Common myeloid progenitor, CD34-positive (primary cell): ENCODE measurements at regions of chr9 and their contacts with region 1.

Region 1: GRCh38 chr9:93132287-93132927 is 1.6 kb downstream of the NINJ1 start:
- DNase-seq: no peak
- H3K4me3 ChIP-seq: peak overlapping the region in 3 of 7 experiments; percentile 75 to 86 (median 79)
- H3K27ac ChIP-seq: no peak overlapping the region
- H3K4me1 ChIP-seq: peaks cover 0 to 74% (median 65%) of the 10 kb centered on the region in 4 experiments
- H3K27me3 ChIP-seq: no peaks in the 10 kb centered on the region

Region 2: DNA sequence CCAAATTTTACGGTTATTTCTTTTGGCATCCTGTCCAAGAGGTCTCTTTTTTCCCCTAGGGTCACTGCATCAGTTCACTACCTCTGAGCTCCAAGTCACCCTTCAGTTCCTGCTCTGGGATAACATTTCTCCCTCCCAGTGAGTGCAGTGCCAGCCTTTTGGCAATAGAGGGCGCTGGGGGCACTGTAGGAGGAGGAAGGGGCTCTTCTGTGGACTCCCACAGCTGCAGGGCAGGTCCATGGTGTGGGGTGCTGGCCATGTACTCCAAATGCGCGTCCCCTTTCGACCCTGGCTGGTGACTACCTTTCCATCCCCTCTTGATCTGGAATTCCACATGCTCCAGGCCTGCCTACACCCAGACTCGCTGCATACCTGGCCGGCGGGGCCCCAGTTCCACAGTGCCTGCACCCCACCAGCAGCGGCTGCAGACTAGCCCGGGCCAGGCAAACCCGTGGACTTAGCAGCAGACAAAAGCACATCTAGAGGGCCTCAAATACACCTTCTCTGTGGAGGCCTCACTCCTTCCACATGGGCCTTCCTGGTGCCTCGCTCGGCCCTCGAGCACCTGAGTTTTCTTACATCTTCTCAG is 22.0 kb after region 1 on chr9:
- CTCF ChIA-PET with region 1: interaction called, 11 read pairs
- POLR2A ChIA-PET with region 1: no interaction called
- DNase-seq: peak; percentile 41 to 61 (median 55)
- H3K4me3 ChIP-seq: no peak overlapping the region
- H3K27ac ChIP-seq: no peak overlapping the region
- H3K4me1 ChIP-seq: no peaks in the 10 kb centered on the region
- H3K27me3 ChIP-seq: no peaks in the 10 kb centered on the region

Region 3: GRCh38 chr9:93183609-93184431 is 51.4 kb after region 1 on chr9 and contains the start of gene WNK2:
- CTCF ChIA-PET with region 1: no interaction called
- POLR2A ChIA-PET with region 1: no interaction called
- DNase-seq: peak; percentile 10 to 53 (median 42)
- H3K4me3 ChIP-seq: peak within 1 kb of the TSS; percentile 15 to 69 (median 45)
- H3K27ac ChIP-seq: no peak within 1 kb of the TSS
- H3K4me1 ChIP-seq: peaks cover 2 to 18% (median 14%) of the 10 kb centered on the region in 4 experiments
- H3K27me3 ChIP-seq: peaks cover 0 to 85% (median 37%) of the 10 kb centered on the region in 5 experiments

Region 4: DNA sequence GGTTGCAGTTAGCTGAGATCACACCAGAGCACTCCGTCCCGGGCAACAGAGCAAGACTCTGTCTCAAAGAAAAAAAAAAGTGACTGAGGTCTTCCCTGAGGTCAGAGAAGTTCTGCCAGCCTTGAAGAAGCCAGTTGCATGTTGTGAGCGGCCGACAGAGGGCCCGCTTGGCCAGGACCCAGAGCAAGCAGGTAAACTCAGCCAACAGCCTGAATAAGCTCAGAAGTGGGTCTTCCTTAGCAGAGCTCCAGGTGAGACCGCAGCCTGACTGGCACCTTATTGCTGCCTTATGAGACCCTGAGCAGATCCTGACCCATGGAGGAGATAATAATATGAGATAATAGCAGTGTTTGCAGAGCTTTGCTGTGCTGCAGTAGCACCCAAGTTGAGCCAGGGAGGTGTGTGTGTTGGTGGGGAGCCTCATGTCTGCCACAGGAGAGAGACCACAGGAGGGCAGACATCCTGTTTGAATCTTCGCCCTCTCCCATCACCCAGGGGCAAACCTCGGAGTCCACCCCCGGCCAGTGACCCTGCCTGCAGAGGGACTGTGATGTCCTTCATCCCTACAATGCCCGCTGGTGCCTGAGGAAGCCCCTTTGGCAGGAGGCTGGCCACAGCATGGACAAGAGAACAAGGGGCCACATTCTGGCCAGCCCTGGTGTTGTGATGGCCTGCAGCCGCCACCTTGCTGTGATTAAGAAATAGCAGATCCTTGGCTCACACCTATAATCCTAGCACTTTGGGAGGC is 833.6 kb after region 1 on chr9:
- CTCF ChIA-PET with region 1: no interaction called
- POLR2A ChIA-PET with region 1: no interaction called
- DNase-seq: no peak
- H3K4me3 ChIP-seq: no peak overlapping the region
- H3K27ac ChIP-seq: no peak overlapping the region
- H3K4me1 ChIP-seq: peaks cover 0 to 5% (median 4%) of the 10 kb centered on the region in 4 experiments
- H3K27me3 ChIP-seq: peaks cover 6 to 35% (median 16%) of the 10 kb centered on the region in 5 experiments